AG04450 (cell line): ENCODE measurements at regions of chr15 and their contacts with region 1.

Region 1: DNA sequence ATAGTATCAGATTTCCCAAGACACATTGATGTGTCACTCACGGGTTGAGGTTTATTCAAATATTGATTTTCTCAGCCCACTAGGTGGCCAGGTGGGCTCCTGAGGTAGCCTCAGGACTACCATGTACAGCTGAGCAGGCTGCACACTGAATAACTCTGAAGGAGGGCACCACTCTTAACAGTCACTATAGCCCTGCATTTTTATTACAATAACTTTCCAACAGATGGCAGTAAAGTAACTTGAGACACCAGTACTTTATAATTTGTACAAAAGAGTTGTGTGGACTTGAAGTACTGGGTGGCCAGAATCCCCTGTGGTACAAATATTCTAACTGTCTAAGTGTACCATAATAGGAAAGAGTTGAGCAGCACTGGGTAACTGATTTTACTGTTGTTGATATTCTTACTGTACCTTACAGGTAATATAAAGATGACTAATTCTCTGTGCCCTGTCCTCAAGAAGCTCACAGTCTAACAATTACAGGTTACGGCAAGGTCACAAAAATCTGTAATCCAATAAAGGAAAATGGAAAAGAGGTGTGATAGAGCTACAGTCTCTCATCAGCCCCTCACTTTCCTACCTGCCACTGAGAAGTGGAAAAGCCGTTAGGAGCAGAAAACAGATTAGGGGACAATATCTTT is 76.0 kb downstream of the ETFA start:
- DNase-seq: peak; percentile 16
- H3K4me3 ChIP-seq: no peak overlapping the region
- H3K27ac ChIP-seq: no peak overlapping the region
- H3K27me3 ChIP-seq: no peaks in the 10 kb centered on the region
- CTCF ChIP-seq: peak; percentile 49

Region 2: DNA sequence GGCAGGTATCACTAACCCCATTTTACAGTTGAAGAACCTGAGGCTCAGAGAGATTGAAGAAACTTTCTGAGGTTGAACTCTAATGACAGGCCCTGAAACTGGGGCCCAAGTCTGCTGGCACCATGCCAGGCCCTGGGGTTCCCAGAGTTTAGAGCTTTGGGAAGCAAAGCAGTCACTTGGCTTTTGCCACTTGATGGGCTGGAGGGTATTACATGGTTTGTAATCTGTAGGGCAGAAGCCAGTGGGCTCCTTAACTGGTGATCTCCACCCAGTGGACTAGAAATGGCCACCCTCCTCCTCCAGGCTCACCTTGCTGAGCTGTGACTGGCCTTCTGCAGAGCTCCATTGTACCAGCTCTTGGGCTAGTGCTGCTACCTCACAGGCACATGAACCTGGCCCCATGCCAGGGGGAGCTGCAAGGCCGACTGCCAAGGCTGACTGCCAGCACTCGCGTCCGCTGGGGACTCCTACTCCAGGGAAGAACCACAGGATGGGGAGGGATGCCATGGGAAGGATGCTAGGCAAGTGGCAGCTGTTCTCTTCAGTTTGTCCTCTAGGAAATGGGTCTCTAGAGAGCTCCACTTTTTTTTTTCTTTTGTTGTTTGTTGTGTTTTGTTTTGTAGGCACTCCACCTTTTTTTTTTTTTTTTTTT is 28.9 kb before region 1 on chr15:
- CTCF ChIA-PET with region 1: no interaction called
- POLR2A ChIA-PET with region 1: no interaction called
- DNase-seq: no peak
- H3K4me3 ChIP-seq: no peak overlapping the region
- H3K27ac ChIP-seq: no peak overlapping the region
- H3K27me3 ChIP-seq: no peaks in the 10 kb centered on the region
- CTCF ChIP-seq: no peak

Region 3: GRCh38 chr15:76223521-76223920 is 11.8 kb before region 1 on chr15:
- CTCF ChIA-PET with region 1: interaction called, 10 read pairs
- POLR2A ChIA-PET with region 1: no interaction called
- DNase-seq: no peak
- H3K4me3 ChIP-seq: no peak overlapping the region
- H3K27ac ChIP-seq: no peak overlapping the region
- H3K27me3 ChIP-seq: no peaks in the 10 kb centered on the region
- CTCF ChIP-seq: no peak

Region 4: GRCh38 chr15:76866716-76867321 is 631.5 kb after region 1 on chr15:
- CTCF ChIA-PET with region 1: interaction called, 23 read pairs
- POLR2A ChIA-PET with region 1: no interaction called
- DNase-seq: peak; percentile 21
- H3K4me3 ChIP-seq: no peak overlapping the region
- H3K27ac ChIP-seq: no peak overlapping the region
- H3K27me3 ChIP-seq: no peaks in the 10 kb centered on the region
- CTCF ChIP-seq: peak; percentile 65